Lower leg skin (tissue), 4 donors: ENCODE measurements at regions of chr1 and their contacts with region 1.

Region 1: GRCh38 chr1:113677250-113678158 is 81.8 kb downstream of the PHTF1 start:
- DNase-seq: no peak
- H3K4me3 ChIP-seq: no peak overlapping the region
- CTCF ChIP-seq: no peak
- POLR2A ChIP-seq: no peak

Region 2: GRCh38 chr1:113140588-113141446 is 536.7 kb before region 1 on chr1:
- intact Hi-C with region 1: loop called (anchors 2 kb)
- DNase-seq: peak in 1 of 2 donors; percentile 43
- H3K4me3 ChIP-seq: no peak overlapping the region
- CTCF ChIP-seq: peak in 1 of 3 donors; percentile 32
- POLR2A ChIP-seq: no peak